Gastrocnemius medialis (tissue), 4 donors: ENCODE measurements at regions of chr16 and their contacts with region 1.

Region 1: GRCh38 chr16:86798247-86799041 is 220.1 kb downstream of the FOXL1 start:
- DNase-seq: no peak
- ATAC-seq: no peak
- H3K4me3 ChIP-seq: no peak overlapping the region
- H3K27ac ChIP-seq: no peak overlapping the region
- H3K4me1 ChIP-seq: no peaks in the 10 kb centered on the region
- H3K27me3 ChIP-seq: peaks cover 3 to 44% (median 23%) of the 10 kb centered on the region in 3 donors
- CTCF ChIP-seq: no peak
- POLR2A ChIP-seq: no peak

Region 2: DNA sequence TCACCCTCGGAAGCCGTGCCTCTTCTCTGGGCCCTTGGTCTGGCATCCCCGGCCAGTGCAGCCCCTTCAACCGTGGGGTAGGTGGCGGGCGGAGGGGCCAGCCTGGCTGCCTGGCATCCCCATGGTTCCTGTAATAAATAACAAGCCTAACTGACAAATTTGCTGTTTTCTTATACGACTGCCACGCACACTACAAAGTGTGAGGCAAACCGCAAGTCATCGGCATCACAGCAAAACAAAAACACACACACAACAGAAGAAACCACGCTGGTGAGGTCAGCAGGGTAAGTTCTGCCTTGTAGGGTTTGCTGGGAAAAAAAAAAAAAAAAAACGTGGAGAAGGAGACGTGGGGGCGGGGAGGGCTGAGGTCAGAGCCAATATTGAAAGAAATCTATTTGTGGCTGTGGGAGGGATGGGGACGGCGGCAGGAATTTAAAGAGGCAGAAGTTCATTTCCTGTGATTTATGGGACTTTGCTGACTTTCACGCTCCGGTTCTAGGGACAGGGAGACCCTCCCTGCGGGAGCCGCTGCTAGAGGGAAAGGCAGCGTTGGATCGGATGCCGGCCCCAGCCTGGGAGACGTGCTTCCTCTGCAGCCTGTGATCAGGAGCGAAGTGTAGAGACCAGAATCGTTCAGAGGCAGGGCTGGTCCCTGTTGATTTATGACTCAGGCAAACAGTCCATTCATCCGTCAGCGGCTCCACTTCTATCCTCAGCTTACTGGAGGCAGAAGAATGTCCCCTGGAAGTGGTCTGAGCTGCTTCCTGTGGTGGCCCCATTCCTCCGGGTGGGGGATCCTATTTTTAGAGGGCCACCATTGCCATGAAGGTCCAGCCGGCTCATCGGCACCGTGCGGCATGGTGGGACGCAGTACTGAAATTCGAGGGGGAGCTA is 57.3 kb before region 1 on chr16:
- in situ Hi-C with region 1: no loop called
- intact Hi-C with region 1: loop called (anchors 10 kb)
- DNase-seq: peak; percentile 31 to 58
- ATAC-seq: peak; percentile 85 to 86
- H3K4me3 ChIP-seq: peak overlapping the region; percentile 43 to 56 (median 52)
- H3K27ac ChIP-seq: peak overlapping the region; percentile 77 to 88 (median 84)
- H3K4me1 ChIP-seq: peaks cover 9 to 19% of the 10 kb centered on the region in 2 donors
- H3K27me3 ChIP-seq: no peaks in the 10 kb centered on the region
- CTCF ChIP-seq: no peak
- POLR2A ChIP-seq: peak; percentile 16 to 37